Common myeloid progenitor, CD34-positive (primary cell): ENCODE measurements at regions of chr12 and their contacts with region 1.

Region 1: GRCh38 chr12:129911428-129912049 is 7.7 kb upstream of the TMEM132D start:
- DNase-seq: peak; percentile 22 to 53 (median 49)
- H3K4me3 ChIP-seq: no peak overlapping the region
- H3K27ac ChIP-seq: no peak overlapping the region
- H3K4me1 ChIP-seq: no peaks in the 10 kb centered on the region
- H3K27me3 ChIP-seq: peaks cover 0 to 23% (median 5%) of the 10 kb centered on the region in 5 experiments

Region 2: GRCh38 chr12:128259556-128260070 is 1651.9 kb before region 1 on chr12:
- CTCF ChIA-PET with region 1: interaction called, 26 read pairs
- POLR2A ChIA-PET with region 1: no interaction called
- DNase-seq: peak; percentile 11 to 35 (median 17)
- H3K4me3 ChIP-seq: no peak overlapping the region
- H3K27ac ChIP-seq: no peak overlapping the region
- H3K4me1 ChIP-seq: no peaks in the 10 kb centered on the region
- H3K27me3 ChIP-seq: peaks cover 4 to 15% (median 10%) of the 10 kb centered on the region in 5 experiments